Breast epithelium (tissue), 4 donors: ENCODE measurements at regions of chr15 and their contacts with region 1.

Region 1: DNA sequence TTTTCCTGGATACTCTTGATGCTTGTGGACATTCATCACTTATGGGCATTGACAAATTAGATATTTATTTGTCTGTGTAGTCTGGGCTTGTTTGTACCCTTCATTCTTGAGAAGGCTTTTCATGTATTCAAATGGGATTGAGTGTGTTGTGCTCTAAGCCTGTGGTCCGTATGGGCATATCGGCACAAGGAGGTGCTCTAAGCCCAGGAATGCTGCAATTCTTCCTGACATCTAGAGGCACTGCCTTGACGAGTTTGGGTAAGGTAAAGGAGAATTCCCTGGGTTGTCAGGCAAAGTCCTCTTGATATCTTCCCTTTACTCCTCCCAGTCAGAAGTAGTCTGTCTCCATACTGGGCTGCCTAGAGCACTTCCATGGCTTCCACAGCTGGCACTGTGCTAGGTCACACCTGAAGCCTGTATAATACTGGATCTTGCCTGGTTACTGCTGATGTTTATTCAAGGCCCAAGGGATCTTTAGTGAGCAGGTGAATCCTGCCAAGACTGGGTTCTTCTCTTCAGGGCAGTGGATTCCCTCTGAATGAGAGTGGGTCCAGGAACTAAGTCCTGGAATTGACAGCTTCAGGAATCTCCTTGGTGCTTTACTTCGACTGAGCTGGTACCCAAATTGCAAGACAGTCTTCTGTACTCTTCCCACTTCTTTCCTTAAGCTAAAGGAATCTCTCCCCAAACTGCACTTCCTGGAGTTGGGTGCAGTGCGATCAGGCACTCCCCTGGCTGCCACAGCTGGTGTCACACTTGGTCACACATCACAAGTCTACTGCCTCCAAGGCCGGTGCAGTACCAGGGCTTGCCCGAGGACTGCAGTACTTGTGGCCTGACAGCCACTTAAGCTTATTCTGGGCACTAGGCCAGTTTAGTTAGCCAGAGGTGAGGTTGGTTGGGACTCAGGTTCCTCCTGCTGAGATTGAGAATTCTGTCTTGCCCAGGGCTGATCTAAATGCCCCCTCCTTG is 46.0 kb downstream of the GALK2 start:
- DNase-seq: no peak
- H3K4me3 ChIP-seq: no peak overlapping the region
- H3K27ac ChIP-seq: no peak overlapping the region
- H3K4me1 ChIP-seq: no peaks in the 10 kb centered on the region
- H3K27me3 ChIP-seq: no peaks in the 10 kb centered on the region
- CTCF ChIP-seq: no peak
- POLR2A ChIP-seq: no peak

Region 2: GRCh38 chr15:50055332-50055731 is 839.3 kb after region 1 on chr15:
- intact Hi-C with region 1: loop called (anchors 5 kb)
- DNase-seq: no peak
- H3K4me3 ChIP-seq: no peak overlapping the region
- H3K27ac ChIP-seq: peak overlapping the region; percentile 56 to 84
- H3K4me1 ChIP-seq: no peaks in the 10 kb centered on the region
- H3K27me3 ChIP-seq: no peaks in the 10 kb centered on the region
- CTCF ChIP-seq: no peak
- POLR2A ChIP-seq: no peak